CD8-positive, alpha-beta T cell (primary cell): ENCODE measurements at regions of chr14 and their contacts with region 1.

Region 1: DNA sequence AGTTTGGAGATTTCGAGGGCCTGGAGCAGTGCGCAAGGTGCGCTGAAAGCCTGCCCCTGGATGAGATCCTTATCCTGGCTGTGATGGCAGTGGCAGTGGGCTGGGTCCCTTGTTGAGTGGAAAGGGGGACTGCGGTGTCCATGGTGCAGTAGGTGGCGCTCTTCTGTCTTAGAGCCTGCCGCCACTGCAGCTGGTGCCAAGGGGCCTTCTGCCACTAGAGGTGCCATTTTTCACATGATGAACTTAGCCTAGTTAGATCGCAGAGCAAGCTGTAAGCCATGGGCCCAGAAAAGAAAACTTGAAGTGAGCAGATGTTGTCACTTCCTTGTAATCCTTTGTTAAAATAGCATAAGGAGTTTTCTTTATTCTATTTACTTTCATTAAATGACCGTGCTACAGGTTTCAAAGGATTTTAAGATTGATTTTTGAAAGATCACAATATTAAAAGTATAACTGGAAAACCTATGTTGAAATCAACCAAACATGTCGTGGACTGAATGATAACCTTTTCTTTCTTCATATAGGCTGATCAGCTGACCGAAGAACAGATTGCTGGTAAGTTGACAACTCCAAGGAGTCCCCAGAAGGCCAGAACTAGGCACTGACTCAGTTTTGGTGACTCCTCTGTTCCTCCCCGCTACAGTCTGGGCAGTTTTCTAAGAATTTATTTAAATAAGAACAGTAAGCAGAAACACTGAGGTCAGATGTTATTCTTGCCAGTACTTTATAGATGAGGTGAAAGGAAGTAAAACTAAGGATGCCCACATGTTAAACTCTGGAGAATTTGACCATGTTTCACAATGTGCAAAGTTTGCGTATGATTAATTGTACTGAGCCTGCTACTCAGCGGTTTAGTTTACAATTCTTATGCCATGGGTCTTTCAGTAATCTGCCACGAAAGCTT is 3.0 kb downstream of the CALM1 start:
- DNase-seq: peak; percentile 73 to 95 (median 85)
- ATAC-seq: peak; percentile 47
- H3K4me3 ChIP-seq: peak overlapping the region; percentile 59 to 75
- H3K4me3 Mint-ChIP-seq: peak overlapping the region; percentile 99
- H3K27ac ChIP-seq: peak overlapping the region; percentile 89
- H3K27ac Mint-ChIP-seq: peak overlapping the region; percentile 99
- H3K4me1 ChIP-seq: peaks cover 56% of the 10 kb centered on the region
- H3K4me1 Mint-ChIP-seq: peaks cover 60% of the 10 kb centered on the region
- H3K27me3 ChIP-seq: no peaks in the 10 kb centered on the region
- H3K27me3 Mint-ChIP-seq: no peaks in the 10 kb centered on the region
- CTCF ChIP-seq: peak; percentile 100

Region 2: DNA sequence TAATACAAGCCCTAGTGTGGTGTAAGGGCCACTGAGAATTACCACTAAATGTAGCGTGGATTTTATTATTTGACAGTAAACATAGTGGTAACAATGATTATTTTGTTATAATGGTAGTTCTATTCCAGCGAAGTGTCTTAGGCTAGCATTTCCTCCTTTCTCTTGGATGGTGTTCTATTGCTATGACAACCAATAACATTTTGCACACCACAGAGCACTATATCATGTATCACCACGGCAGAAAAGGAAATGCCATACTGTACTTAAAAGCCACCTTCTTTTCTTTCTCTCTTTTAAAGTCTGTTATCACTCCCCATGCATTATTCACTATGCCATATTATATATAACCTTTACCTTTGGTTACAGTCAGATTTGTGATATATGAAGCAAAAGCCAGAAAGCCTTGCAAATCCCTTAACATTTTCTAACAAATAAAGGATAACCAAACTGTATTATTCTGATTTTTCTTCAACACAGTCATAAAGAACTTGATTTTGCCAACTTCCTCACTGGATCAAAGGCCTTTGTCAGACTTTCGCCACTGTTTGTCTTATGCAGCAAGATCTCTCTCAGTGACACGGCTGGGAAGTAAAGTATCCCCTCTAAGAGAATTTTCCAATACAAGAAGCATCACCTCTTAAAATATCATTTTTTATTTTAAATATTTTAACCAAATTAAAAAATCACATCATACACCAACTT is 1178.5 kb before region 1 on chr14:
- CTCF ChIA-PET with region 1: no interaction called
- POLR2A ChIA-PET with region 1: no interaction called
- intact Hi-C with region 1: loop called in 1 of 2 experiments (anchors 5 kb)
- DNase-seq: peak in 2 of 9 experiments; percentile 37 to 69
- ATAC-seq: peak; percentile 91
- H3K4me3 ChIP-seq: no peak overlapping the region
- H3K4me3 Mint-ChIP-seq: no peak overlapping the region
- H3K27ac ChIP-seq: no peak overlapping the region
- H3K27ac Mint-ChIP-seq: peak overlapping the region; percentile 43
- H3K4me1 ChIP-seq: peaks cover 10% of the 10 kb centered on the region
- H3K4me1 Mint-ChIP-seq: peaks cover 50% of the 10 kb centered on the region
- H3K27me3 ChIP-seq: no peaks in the 10 kb centered on the region
- H3K27me3 Mint-ChIP-seq: no peaks in the 10 kb centered on the region
- CTCF ChIP-seq: no peak

Region 3: GRCh38 chr14:90331497-90332435 is 68.0 kb before region 1 on chr14 and contains the start of gene NRDE2:
- CTCF ChIA-PET with region 1: interaction called, 4 read pairs
- POLR2A ChIA-PET with region 1: interaction called, 7 read pairs
- intact Hi-C with region 1: loop called (anchors 1 to 5 kb)
- DNase-seq: peak; percentile 81 to 97 (median 93)
- ATAC-seq: peak; percentile 95
- H3K4me3 ChIP-seq: peak within 1 kb of the TSS; percentile 86 to 90
- H3K4me3 Mint-ChIP-seq: peak within 1 kb of the TSS; percentile 90
- H3K27ac ChIP-seq: peak within 1 kb of the TSS; percentile 63 to 88
- H3K27ac Mint-ChIP-seq: peak within 1 kb of the TSS; percentile 94
- H3K4me1 ChIP-seq: peaks cover 21% of the 10 kb centered on the region
- H3K4me1 Mint-ChIP-seq: peaks cover 32% of the 10 kb centered on the region
- H3K27me3 ChIP-seq: no peaks in the 10 kb centered on the region
- H3K27me3 Mint-ChIP-seq: peaks cover 11% of the 10 kb centered on the region
- CTCF ChIP-seq: no peak
- total RNA-seq, gene NRDE2: 22.8 to 23.0 TPM

Region 4: DNA sequence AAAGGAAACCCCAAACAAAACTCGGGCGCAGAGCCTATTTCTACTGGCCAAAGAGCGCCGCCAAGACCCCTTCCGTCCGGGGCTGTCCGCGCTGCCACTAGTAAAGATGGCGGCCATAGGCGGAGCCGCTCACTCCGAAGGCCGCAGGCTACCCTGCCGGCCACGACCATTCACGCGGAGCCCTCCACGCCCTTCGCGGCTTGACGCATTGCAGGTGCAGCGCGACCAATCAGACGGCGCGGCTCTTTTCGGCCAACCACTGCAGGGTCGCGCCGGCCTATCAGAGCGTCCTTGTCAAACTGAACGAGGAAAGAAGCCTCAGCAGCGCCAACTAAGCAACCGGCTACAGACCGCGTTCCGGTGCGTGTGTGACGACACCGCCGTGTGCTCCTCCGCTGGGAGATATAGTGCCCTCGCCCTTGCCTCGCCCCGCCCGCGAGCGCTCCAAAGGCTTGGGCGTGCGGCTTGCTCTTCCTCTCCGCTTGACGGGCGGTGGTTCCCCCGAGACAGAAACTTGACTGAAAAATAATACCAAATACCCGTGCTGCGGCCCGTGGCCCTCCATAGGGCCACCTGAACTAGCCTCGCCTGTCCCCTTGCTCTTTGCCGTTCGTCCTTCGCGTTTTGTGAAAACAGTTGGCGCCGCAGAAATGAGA is 16.6 kb before region 1 on chr14:
- CTCF ChIA-PET with region 1: interaction called, 77 read pairs
- POLR2A ChIA-PET with region 1: interaction called, 307 read pairs
- intact Hi-C with region 1: loop called (anchors 1 kb)
- DNase-seq: peak; percentile 94 to 99 (median 97)
- ATAC-seq: peak; percentile 77
- H3K4me3 ChIP-seq: peak overlapping the region; percentile 88 to 90
- H3K4me3 Mint-ChIP-seq: no peak overlapping the region
- H3K27ac ChIP-seq: peak overlapping the region; percentile 99 to 100
- H3K27ac Mint-ChIP-seq: no peak overlapping the region
- H3K4me1 ChIP-seq: peaks cover 23% of the 10 kb centered on the region
- H3K4me1 Mint-ChIP-seq: peaks cover 28% of the 10 kb centered on the region
- H3K27me3 ChIP-seq: no peaks in the 10 kb centered on the region
- H3K27me3 Mint-ChIP-seq: no peaks in the 10 kb centered on the region
- CTCF ChIP-seq: no peak

Region 5: DNA sequence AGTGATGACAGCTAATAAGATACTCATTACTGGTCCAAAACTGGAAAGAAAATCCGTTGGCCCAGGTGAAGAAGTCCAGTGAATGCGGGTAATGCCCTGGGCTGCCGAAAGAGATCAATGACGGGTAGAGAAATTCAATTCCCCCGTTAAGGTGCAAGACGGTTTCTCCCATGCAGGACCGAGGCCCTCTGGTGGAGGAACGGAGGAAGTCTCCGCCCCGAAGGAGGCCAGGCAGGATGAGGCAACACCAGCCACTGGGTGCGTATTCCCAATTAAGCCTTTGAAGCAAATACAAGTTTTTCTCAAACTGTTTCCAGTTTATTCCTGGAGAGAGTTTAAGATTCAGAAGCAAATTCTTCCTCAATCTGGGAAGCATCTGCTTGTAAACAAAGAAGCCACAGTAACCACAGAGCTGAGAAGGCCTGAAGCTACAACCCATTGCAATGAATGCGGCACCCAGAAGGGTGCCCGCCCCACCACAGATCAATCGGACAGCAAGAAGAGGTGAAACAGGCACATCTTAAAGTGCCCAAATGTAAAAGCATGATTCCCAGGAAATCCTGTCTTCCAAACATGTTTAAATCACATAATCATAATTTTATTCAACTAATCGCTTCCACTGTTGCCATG is 297.9 kb after region 1 on chr14:
- CTCF ChIA-PET with region 1: interaction called, 38 read pairs
- POLR2A ChIA-PET with region 1: interaction called, 10 read pairs
- intact Hi-C with region 1: loop called (anchors 1 kb)
- DNase-seq: peak; percentile 55 to 85 (median 73)
- ATAC-seq: peak; percentile 90
- H3K4me3 ChIP-seq: no peak overlapping the region
- H3K4me3 Mint-ChIP-seq: no peak overlapping the region
- H3K27ac ChIP-seq: no peak overlapping the region
- H3K27ac Mint-ChIP-seq: no peak overlapping the region
- H3K4me1 ChIP-seq: no peaks in the 10 kb centered on the region
- H3K4me1 Mint-ChIP-seq: no peaks in the 10 kb centered on the region
- H3K27me3 ChIP-seq: no peaks in the 10 kb centered on the region
- H3K27me3 Mint-ChIP-seq: no peaks in the 10 kb centered on the region
- CTCF ChIP-seq: peak; percentile 88

Region 6: DNA sequence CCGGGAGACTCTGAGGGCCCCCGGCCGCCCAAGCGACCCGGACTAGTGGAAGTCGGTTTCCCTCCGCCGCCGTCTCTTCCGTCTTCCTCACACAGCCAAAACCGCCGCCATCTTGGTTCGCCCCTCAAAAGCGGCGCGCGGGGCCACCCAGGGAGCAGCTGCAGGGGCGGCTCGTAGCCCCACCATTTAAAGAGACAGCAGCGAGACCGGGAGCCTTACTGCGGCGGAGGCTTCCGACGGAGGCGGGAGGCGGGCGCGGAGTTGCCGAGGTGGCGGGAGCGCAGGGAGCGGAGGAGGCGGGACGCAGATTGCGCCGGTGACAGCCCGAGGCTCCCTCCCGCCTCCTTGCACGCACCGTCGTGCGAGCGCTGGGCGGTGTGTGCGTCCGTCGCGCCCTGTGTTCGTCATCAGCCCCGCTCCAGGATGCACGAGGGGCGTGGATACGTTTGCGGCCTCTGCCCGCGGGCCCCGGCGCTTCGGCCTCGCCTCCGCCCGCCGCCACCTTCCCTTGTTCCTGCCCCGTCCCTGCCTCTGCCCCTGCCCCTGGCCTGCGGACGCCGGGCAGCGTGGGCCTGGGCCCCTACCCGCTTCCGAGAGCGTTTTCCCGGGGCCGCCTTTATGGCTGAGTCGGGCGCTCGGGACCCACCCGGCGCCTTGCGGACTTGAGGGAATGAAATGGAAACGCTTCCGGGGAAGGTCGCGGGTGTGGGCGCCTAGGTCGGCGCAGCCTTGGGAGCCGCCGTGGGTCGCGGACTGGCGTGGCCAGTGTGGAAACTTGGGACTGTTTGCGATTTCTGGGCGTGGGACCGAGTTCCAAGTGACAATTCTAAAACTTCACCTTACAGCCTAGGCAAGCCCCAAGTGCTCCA is 1110.6 kb after region 1 on chr14 and contains the start of gene PPP4R3A:
- CTCF ChIA-PET with region 1: no interaction called
- POLR2A ChIA-PET with region 1: no interaction called
- intact Hi-C with region 1: loop called in 1 of 2 experiments (anchors 5 kb)
- DNase-seq: peak; percentile 84 to 99 (median 93)
- ATAC-seq: peak; percentile 86
- H3K4me3 ChIP-seq: peak within 1 kb of the TSS; percentile 48 to 96
- H3K4me3 Mint-ChIP-seq: peak within 1 kb of the TSS; percentile 100
- H3K27ac ChIP-seq: peak within 1 kb of the TSS; percentile 94 to 98
- H3K27ac Mint-ChIP-seq: peak within 1 kb of the TSS; percentile 100
- H3K4me1 ChIP-seq: peaks cover 26% of the 10 kb centered on the region
- H3K4me1 Mint-ChIP-seq: peaks cover 32% of the 10 kb centered on the region
- H3K27me3 ChIP-seq: no peaks in the 10 kb centered on the region
- H3K27me3 Mint-ChIP-seq: no peaks in the 10 kb centered on the region
- CTCF ChIP-seq: no peak
- total RNA-seq, gene PPP4R3A: 279 to 285 TPM